ENCODE measurements at regions of chr3 and their contacts with region 1.

Region 1: GRCh38 chr3:37907906-37908305 is 46.2 kb downstream of the CTDSPL start:
- DNase-seq: peak; percentile 46
- H3K4me3 Mint-ChIP-seq: peak overlapping the region; percentile 24
- H3K27ac Mint-ChIP-seq: peak overlapping the region; percentile 85
- H3K4me1 Mint-ChIP-seq: peaks cover 54% of the 10 kb centered on the region
- H3K27me3 Mint-ChIP-seq: peaks cover 3% of the 10 kb centered on the region

Region 2: DNA sequence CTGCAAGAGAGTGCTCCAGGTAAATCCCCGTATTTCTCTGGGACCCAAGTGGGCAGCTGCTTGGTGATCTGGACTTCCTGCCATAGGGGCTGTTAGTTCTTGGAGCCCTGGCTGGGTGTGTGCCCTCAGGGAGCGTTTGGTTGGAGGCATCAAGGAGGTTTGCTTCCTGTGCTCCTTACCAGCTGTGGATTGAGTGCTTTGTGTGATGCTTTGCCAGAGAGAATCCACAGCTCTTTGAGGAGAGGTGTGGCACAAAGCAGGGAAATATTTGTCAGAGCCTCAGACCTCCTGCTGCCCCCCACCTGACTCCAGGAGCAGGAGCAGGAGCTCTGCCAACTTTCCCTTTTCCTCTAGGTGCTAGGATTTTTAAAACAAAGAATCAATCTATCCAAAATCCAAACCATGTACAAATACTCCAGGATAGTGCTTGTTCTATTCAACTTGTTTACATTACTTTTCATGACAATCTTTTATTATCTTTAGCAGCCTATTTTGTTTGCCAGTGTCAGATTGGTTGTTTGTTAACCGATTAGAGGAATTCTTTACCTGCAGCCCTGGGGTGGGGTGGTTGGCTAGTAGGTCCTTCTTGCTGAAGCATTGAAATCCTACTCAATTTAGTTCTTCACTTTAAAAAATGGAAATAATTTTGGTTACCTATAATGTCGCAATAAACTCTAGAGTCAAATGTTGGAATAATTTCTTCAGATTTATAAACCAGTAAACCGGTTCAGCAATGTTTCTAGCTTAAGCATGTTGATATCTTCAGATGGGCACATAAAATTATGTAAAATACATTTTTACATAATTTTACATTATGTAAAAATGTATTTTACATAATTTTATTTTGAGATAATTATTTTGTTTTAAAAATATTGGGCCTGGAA is 43.7 kb before region 1 on chr3:
- intact Hi-C with region 1: loop called (anchors 2 kb)
- DNase-seq: no peak
- H3K4me3 Mint-ChIP-seq: no peak overlapping the region
- H3K27ac Mint-ChIP-seq: no peak overlapping the region
- H3K4me1 Mint-ChIP-seq: peaks cover 27% of the 10 kb centered on the region
- H3K27me3 Mint-ChIP-seq: peaks cover 29% of the 10 kb centered on the region

Region 3: GRCh38 chr3:37944391-37944842 is 36.5 kb after region 1 on chr3:
- intact Hi-C with region 1: loop called (anchors 5 kb)
- DNase-seq: no peak
- H3K4me3 Mint-ChIP-seq: no peak overlapping the region
- H3K27ac Mint-ChIP-seq: no peak overlapping the region
- H3K4me1 Mint-ChIP-seq: peaks cover 14% of the 10 kb centered on the region
- H3K27me3 Mint-ChIP-seq: no peaks in the 10 kb centered on the region

Region 4: DNA sequence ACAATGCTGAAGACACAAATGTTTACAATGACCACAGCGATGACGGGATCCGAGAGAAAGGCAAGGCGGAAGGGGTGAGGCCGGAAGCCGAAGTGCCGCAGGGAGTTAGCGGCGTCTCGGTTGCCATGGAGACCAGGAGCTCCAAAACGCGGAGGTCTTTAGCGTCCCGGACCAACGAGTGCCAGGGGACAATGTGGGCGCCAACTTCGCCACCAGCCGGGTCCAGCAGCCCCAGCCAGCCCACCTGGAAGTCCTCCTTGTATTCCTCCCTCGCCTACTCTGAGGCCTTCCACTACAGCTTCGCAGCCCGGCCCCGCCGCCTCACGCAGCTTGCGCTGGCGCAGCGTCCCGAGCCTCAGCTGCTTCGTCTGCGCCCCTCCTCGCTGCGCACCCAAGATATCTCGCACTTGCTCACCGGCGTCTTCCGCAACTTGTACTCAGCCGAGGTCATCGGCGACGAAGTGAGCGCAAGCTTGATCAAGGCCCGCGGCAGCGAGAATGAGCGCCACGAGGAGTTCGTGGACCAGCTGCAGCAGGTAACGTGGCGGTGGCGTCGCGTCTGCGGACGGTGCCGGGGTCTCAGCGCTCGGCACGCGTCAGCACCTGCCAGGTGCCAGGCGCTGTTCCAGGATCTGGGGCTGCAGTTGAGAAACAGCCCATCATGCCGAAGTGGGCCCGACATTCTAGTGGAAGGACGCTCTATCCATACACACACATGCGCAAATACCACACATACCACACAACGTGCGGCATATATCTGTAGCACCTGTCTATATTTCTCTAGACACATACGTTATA is 131.4 kb after region 1 on chr3 and contains the start of gene DLEC1:
- intact Hi-C with region 1: loop called (anchors 10 kb)
- DNase-seq: peak; percentile 86
- H3K4me3 Mint-ChIP-seq: peak within 1 kb of the TSS; percentile 66
- H3K27ac Mint-ChIP-seq: peak within 1 kb of the TSS; percentile 95
- H3K4me1 Mint-ChIP-seq: peaks cover 32% of the 10 kb centered on the region
- H3K27me3 Mint-ChIP-seq: peaks cover 7% of the 10 kb centered on the region
- total RNA-seq, gene DLEC1: 0.02 and 0.16 TPM in 2 replicates

Measured in activated T-helper 2 cell treated with anti-CD3 and anti-CD28 coated beads, Interferon-gamma antibody, Interleukin-2, Interleukin-4, amounts not matched to agents 10 μg/mL and 5 μg/mL and 100 μg/mL, durations not matched to agents 14 hours and 24 hours and 36 hours (primary cell).